Testis (tissue), 5 donors: ENCODE measurements at regions of chr1 and their contacts with region 1.

Region 1: DNA sequence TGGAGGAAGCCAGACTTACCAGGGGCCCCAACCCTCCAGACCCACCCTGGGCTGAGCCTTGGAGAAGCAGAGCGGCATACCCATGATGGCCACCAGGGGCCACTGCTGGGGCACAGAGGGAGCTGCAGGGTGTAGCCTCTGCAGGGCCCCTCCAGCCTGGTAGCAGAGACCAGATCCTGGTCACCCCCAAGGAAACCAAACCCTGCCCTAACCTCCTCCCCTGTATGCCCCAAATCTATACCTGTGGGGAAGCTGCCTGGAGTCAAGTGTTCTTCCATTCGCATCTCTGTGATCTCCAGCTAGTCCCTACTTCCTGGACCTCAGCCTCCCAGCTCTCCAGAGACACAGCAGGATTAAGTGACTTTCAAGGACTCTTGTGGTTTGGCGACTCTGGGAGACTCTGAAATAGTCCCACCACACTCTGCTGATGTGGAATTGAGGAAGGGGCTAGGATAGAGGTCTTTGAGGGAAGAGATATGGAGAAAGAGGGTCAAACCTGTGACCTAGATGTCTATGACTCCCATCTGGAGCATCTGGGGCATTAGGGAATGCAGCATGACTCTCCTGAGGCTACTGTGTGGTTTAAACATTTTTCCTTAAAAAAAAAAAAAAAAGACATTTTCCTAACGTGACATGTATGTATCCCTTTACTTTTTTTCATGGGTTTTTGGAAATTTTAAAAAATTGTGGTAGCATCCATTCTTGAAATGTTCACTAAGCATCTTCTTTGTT is 119.2 kb upstream of the IPO9 start:
- DNase-seq: peak; percentile 76
- H3K4me3 ChIP-seq: no peak overlapping the region
- H3K27ac ChIP-seq: no peak overlapping the region
- H3K4me1 ChIP-seq: peaks cover 24% of the 10 kb centered on the region
- H3K27me3 ChIP-seq: no peaks in the 10 kb centered on the region
- CTCF ChIP-seq: peak; percentile 79 to 92 (median 86)
- POLR2A ChIP-seq: no peak

Region 2: GRCh38 chr1:201559679-201560162 is 150.0 kb before region 1 on chr1:
- intact Hi-C with region 1: loop called (anchors 10 kb)
- DNase-seq: peak; percentile 91
- H3K4me3 ChIP-seq: no peak overlapping the region
- H3K27ac ChIP-seq: no peak overlapping the region
- H3K4me1 ChIP-seq: no peaks in the 10 kb centered on the region
- H3K27me3 ChIP-seq: no peaks in the 10 kb centered on the region
- CTCF ChIP-seq: peak; percentile 93 to 98 (median 97)
- POLR2A ChIP-seq: no peak

Region 3: GRCh38 chr1:201792534-201793305 is 83.0 kb after region 1 on chr1:
- intact Hi-C with region 1: loop called (anchors 2 kb)
- DNase-seq: peak; percentile 84
- H3K4me3 ChIP-seq: no peak overlapping the region
- H3K27ac ChIP-seq: no peak overlapping the region
- H3K4me1 ChIP-seq: peaks cover 21% of the 10 kb centered on the region
- H3K27me3 ChIP-seq: no peaks in the 10 kb centered on the region
- CTCF ChIP-seq: peak; percentile 97
- POLR2A ChIP-seq: no peak